Vagina (tissue), 2 donors: ENCODE measurements at regions of chr3 and their contacts with region 1.

Region 1: DNA sequence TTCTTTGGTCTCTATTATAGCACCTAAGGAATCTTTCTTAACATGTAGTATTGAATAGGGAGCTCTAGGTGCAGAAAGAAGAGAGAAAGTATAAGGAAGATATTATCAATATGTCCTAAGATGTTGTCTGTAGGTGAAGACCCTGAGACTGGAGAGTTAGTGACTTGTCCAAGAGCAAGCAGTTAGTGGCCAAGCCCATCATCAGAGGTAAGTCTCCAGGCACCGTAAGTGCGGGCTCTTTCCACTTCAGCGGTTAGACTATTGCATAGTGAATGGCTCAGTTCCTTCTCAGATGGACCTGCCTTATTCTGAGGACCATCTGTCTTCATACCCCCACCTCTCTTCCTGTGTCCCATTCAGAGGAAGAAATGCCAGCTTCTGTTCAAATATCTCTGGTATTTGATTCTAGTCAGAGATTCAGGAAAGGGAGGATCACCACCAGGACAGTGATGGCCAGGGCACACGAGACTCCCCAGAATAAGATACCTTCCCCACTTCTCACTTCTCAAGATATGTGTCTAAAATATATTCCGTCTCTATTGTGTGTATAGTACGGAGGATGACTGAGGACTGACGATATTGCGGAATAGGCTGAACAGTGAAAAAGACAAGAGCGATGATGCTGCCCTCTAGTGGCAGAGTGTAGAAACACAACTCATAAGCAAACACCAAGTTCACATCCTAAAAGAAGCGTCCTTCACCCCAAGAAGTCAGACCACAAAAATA is 19.1 kb upstream of the ADGRG7 start:
- DNase-seq: no peak
- H3K4me3 ChIP-seq: no peak overlapping the region
- H3K27ac ChIP-seq: no peak overlapping the region
- H3K4me1 ChIP-seq: no peaks in the 10 kb centered on the region
- H3K27me3 ChIP-seq: no peaks in the 10 kb centered on the region
- CTCF ChIP-seq: peak; percentile 60 to 86 (median 86)
- POLR2A ChIP-seq: no peak

Region 2: GRCh38 chr3:100316641-100317069 is 273.6 kb before region 1 on chr3:
- intact Hi-C with region 1: loop called (anchors 10 kb)
- DNase-seq: no peak
- H3K4me3 ChIP-seq: no peak overlapping the region
- H3K27ac ChIP-seq: no peak overlapping the region
- H3K4me1 ChIP-seq: no peaks in the 10 kb centered on the region
- H3K27me3 ChIP-seq: no peaks in the 10 kb centered on the region
- CTCF ChIP-seq: peak in 2 of 3 experiments; percentile 38 to 56
- POLR2A ChIP-seq: no peak

Region 3: DNA sequence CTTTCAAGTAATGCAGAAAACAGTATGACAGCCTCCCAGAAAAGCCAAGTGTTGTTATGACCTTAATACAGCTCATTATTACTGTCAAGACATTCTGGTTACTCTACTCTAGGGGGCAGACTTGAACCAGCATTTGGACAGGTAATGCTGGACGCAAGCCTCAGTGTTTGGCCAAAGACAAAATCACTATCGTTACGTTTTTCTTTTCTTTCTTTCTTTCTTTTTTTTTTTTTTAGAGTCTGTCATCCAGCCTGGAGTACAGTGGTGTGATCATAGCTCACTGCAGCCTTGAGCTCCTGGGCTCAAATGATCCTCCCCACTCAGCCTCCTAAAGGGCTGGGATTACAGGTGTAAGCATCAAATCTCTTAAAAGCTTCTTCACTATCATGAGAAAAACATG is 127.3 kb before region 1 on chr3:
- intact Hi-C with region 1: loop called (anchors 5 kb)
- DNase-seq: no peak
- H3K4me3 ChIP-seq: no peak overlapping the region
- H3K27ac ChIP-seq: no peak overlapping the region
- H3K4me1 ChIP-seq: no peaks in the 10 kb centered on the region
- H3K27me3 ChIP-seq: no peaks in the 10 kb centered on the region
- CTCF ChIP-seq: peak in 2 of 3 experiments; percentile 67 to 74
- POLR2A ChIP-seq: no peak

Region 4: GRCh38 chr3:100537622-100538338 is 52.5 kb before region 1 on chr3:
- intact Hi-C with region 1: no loop called
- DNase-seq: no peak
- H3K4me3 ChIP-seq: no peak overlapping the region
- H3K27ac ChIP-seq: no peak overlapping the region
- H3K4me1 ChIP-seq: peaks cover 26% of the 10 kb centered on the region
- H3K27me3 ChIP-seq: no peaks in the 10 kb centered on the region
- CTCF ChIP-seq: no peak
- POLR2A ChIP-seq: no peak

Region 5: GRCh38 chr3:101195951-101196713 is 605.9 kb after region 1 on chr3:
- intact Hi-C with region 1: loop called (anchors 5 kb)
- DNase-seq: no peak
- H3K4me3 ChIP-seq: no peak overlapping the region
- H3K27ac ChIP-seq: peak overlapping the region; percentile 30
- H3K4me1 ChIP-seq: no peaks in the 10 kb centered on the region
- H3K27me3 ChIP-seq: no peaks in the 10 kb centered on the region
- CTCF ChIP-seq: peak; percentile 39 to 68 (median 62)
- POLR2A ChIP-seq: no peak